ENCODE measurements at regions of chr20 and their contacts with region 1.

Region 1: DNA sequence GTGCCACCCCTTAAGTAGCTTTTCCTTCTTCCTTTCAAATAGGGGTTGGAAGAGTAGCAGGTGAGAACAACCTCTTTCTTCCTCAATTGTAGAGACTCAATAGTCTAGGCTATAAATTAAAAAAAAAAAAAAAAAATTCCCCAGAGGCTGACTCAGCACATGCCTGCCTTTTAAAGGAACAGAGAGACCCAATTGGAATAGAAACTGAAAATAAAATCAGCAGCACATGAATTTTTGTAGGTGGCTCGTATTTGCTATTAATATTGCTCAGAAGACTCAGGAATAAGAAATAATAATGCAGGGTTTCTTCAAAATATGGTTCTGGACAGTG is 19.3 kb downstream of the TOP1 start:
- DNase-seq: peak in 4 of 5 donors; percentile 46 to 58 (median 54)
- H3K4me3 ChIP-seq: peak overlapping the region; percentile 18 to 39
- H3K4me3 Mint-ChIP-seq: peak overlapping the region; percentile 76 to 92 (median 84)
- H3K27ac ChIP-seq: peak overlapping the region; percentile 57
- H3K27ac Mint-ChIP-seq: peak overlapping the region; percentile 73 to 96 (median 91)
- H3K4me1 ChIP-seq: peaks cover 90% of the 10 kb centered on the region
- H3K4me1 Mint-ChIP-seq: peaks cover 69 to 97% (median 84%) of the 10 kb centered on the region in 4 donors
- H3K27me3 ChIP-seq: no peaks in the 10 kb centered on the region
- H3K27me3 Mint-ChIP-seq: no peaks in the 10 kb centered on the region

Region 2: DNA sequence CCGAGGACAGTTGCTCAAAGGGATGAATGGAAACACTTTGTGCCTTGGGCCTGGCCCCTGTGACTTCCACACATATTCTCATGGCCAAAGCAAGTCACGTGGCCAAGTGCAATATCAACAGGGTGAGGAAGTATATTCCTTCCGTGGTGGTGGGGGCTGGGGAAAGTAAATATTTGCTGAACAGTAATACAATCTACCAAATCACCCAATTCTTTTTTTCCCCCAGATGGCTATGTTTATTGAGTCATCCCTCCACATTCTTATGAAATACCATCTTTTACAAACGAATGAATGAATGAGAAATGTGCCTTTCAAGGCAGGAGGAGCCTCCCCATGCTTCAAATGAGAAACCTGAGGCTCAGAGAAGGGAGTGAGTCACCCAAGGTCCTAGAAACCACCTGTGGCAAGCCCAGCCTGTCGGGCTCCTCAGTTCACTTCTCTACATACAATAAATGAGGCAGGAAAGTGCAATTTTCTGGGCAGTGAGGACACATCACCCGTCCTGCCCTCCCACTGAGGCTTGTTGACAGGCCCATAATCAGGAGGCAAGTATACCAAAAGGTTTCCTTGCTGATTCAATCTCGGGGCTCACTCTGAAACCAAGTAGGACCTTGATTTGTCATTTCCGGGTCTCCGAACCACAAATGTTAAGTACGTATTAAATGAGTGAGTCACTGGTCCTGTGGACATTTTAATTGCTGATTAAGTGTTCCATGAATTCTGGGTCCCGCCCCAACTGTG is 44.6 kb before region 1 on chr20:
- CTCF ChIA-PET with region 1: no interaction called
- POLR2A ChIA-PET with region 1: interaction called, 3 read pairs
- intact Hi-C with region 1: loop called (anchors 2 kb)
- DNase-seq: peak; percentile 76 to 91 (median 83)
- H3K4me3 ChIP-seq: peak overlapping the region; percentile 19 to 60
- H3K4me3 Mint-ChIP-seq: peak overlapping the region; percentile 78 to 90 (median 82)
- H3K27ac ChIP-seq: peak overlapping the region; percentile 72
- H3K27ac Mint-ChIP-seq: peak overlapping the region; percentile 95 to 99 (median 97)
- H3K4me1 ChIP-seq: peaks cover 13% of the 10 kb centered on the region
- H3K4me1 Mint-ChIP-seq: peaks cover 16 to 41% (median 22%) of the 10 kb centered on the region in 4 donors
- H3K27me3 ChIP-seq: no peaks in the 10 kb centered on the region
- H3K27me3 Mint-ChIP-seq: no peaks in the 10 kb centered on the region

Region 3: GRCh38 chr20:41086402-41087338 is 38.7 kb after region 1 on chr20:
- CTCF ChIA-PET with region 1: no interaction called
- POLR2A ChIA-PET with region 1: interaction called, 3 read pairs
- intact Hi-C with region 1: loop called (anchors 2 kb)
- DNase-seq: peak in 1 of 5 donors; percentile 17
- H3K4me3 ChIP-seq: no peak overlapping the region
- H3K4me3 Mint-ChIP-seq: peak overlapping the region in 4 of 8 donors; percentile 2 to 37 (median 5)
- H3K27ac ChIP-seq: no peak overlapping the region
- H3K27ac Mint-ChIP-seq: peak overlapping the region; percentile 37 to 86 (median 69)
- H3K4me1 ChIP-seq: peaks cover 19% of the 10 kb centered on the region
- H3K4me1 Mint-ChIP-seq: peaks cover 16 to 37% (median 26%) of the 10 kb centered on the region in 4 donors
- H3K27me3 ChIP-seq: no peaks in the 10 kb centered on the region
- H3K27me3 Mint-ChIP-seq: no peaks in the 10 kb centered on the region